Activated CD4-positive, alpha-beta T cell treated with anti-CD3 and anti-CD28 coated beads for 36 hours (primary cell): ENCODE measurements at regions of chr13 and their contacts with region 1.

Region 1: DNA sequence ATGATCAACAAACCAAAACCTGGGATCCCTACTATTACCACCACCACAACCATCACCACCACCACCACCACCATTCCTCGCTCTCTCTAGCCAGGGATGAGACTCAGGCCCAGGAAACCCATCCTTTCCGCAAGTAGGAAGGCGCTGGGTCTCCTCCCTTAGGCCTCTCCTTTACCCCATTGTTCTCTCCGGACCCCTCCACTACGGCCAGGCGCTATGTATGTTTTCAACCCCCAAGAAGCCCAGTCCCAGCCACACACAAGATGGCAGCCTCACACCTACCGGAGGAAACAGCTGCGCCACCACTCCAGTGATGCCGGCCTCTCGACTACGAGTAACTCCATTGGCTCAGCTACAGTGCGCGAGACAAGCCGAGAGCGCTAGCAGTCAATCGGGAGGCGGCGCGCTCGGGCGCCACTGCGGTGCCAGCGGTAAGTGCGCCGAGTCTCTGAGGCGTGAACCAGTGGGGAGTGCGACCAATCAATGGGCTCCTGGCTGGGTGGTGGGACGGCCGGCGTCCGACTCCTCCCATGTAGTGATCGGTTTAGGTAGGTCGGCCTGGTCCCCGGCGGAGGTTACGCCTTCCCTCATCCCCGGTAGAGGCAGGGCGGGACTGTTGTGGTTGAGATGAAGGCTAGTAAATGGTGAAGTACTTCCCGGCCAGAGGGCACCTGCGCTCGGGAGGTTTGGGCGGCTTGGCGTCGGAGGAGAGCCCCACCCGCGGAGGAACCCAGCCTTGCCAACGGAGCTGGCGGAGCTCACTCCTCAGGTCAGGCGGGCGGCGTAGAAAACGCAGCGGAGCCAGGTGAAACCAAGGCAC is at the starts of genes CAB39L and SETDB2:
- DNase-seq: peak; percentile 99
- ATAC-seq: peak; percentile 94
- H3K4me3 Mint-ChIP-seq: peak within 1 kb of the TSS; percentile 100
- H3K27ac Mint-ChIP-seq: peak within 1 kb of the TSS; percentile 100
- H3K4me1 Mint-ChIP-seq: peaks cover 57% of the 10 kb centered on the region
- H3K27me3 Mint-ChIP-seq: no peaks in the 10 kb centered on the region
- total RNA-seq, gene CAB39L: 4.8 to 5.7 TPM
- total RNA-seq, gene SETDB2: 14.2 to 15.1 TPM

Region 2: GRCh38 chr13:49110122-49110912 is 333.6 kb before region 1 on chr13:
- CTCF ChIA-PET with region 1: no interaction called
- POLR2A ChIA-PET with region 1: no interaction called
- intact Hi-C with region 1: loop called in 1 of 2 experiments (anchors 5 kb)
- DNase-seq: peak; percentile 87
- ATAC-seq: peak; percentile 79
- H3K4me3 Mint-ChIP-seq: peak overlapping the region; percentile 85
- H3K27ac Mint-ChIP-seq: peak overlapping the region; percentile 86
- H3K4me1 Mint-ChIP-seq: peaks cover 25% of the 10 kb centered on the region
- H3K27me3 Mint-ChIP-seq: no peaks in the 10 kb centered on the region

Region 3: GRCh38 chr13:49454388-49455006 is 10.6 kb after region 1 on chr13:
- CTCF ChIA-PET with region 1: interaction called, 7 read pairs
- POLR2A ChIA-PET with region 1: interaction called, 3 read pairs
- intact Hi-C with region 1: loop called in 1 of 2 experiments (anchors 1 kb)
- DNase-seq: no peak
- ATAC-seq: peak; percentile 87
- H3K4me3 Mint-ChIP-seq: peak overlapping the region; percentile 26
- H3K27ac Mint-ChIP-seq: peak overlapping the region; percentile 59
- H3K4me1 Mint-ChIP-seq: peaks cover 28% of the 10 kb centered on the region
- H3K27me3 Mint-ChIP-seq: no peaks in the 10 kb centered on the region

Region 4: DNA sequence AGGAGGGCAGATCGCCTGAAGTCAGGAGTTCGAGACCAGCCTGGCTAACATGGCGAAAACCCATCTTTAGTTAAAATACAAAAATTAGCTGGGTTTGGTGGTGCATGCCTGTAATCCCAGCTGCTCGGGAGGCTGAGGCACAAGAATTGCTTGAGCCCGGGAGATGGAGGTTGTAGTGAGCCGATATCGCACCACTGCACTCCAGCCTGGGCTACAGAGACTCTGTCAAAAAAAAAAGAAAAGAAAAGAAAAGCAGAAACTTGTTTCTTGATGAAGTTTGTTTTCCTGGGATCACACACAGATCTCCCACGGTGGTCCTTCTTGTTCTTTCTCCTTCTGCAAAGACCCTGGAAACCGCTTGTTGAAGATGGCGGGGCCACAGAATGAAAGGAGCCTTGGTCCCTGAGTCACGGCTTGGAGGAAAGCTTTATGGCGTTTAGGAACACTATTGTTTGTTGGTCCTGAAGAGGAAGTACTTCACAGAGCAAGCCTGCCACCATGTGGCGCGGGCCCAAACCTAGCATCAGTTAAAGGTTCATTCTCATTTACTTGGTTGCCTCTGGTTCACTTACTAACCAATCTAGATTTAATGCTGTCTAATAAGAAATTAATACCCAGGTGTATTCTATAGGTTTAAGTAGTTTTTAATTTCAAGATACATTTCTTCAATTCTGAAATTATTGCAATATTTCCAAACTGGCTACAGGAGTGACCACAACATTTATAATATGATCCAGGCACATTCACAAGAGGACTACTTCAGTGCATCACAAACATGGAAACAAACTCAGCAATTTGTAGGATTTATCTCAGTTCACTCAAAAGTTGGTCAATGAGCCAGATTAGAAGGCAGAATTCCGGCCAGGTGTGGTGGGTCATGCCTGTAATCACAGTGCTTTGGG is 163.1 kb after region 1 on chr13:
- CTCF ChIA-PET with region 1: interaction called, 5 read pairs
- POLR2A ChIA-PET with region 1: no interaction called
- intact Hi-C with region 1: loop called in 1 of 2 experiments (anchors 5 kb)
- DNase-seq: peak; percentile 90
- ATAC-seq: peak; percentile 98
- H3K4me3 Mint-ChIP-seq: peak overlapping the region; percentile 68
- H3K27ac Mint-ChIP-seq: peak overlapping the region; percentile 75
- H3K4me1 Mint-ChIP-seq: peaks cover 2% of the 10 kb centered on the region
- H3K27me3 Mint-ChIP-seq: no peaks in the 10 kb centered on the region

Region 5: DNA sequence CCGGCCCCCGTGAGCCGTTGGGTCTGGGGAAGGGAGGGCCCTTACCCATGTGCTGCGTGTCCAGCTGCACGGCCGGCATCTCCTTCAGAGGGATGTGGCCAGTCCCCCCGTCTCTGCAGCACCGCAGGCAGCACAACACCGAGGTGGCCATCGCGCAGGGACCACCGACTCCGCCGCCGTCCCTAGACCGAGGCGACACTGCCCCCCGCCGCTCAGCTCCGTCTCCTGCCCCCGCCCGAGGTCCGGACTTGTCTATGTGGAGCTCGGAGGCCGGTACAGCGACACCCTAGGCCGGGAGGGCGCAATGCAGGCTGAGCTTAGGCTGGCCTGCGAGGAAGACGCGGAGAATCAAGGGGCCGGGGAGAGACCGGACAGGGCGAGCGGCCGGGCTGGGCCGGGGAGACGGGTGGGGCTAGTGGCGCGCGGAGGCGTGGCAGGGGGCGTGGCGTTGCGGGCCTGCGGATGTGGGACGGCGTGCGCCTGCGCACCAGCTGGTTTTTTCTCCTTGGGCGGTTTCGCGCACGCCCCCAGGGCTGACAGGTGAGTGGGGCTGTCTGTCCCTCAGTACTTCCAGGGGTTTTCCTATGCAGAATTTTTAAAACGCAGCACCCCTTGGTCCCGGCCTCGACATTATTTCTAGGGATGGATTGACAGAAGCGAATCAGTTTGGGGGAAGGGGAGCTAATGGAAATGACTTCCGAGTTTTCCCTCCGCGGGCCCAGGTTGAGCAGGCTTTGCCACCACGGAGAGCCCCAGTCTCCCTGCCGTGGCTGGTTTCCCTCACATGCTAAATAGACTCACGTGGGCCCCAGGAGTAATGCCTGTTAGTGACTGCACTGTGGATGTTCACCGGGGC is 492.4 kb after region 1 on chr13 and contains the start of gene SPRYD7:
- CTCF ChIA-PET with region 1: no interaction called
- POLR2A ChIA-PET with region 1: no interaction called
- intact Hi-C with region 1: loop called in 1 of 2 experiments (anchors 1 kb)
- DNase-seq: peak; percentile 98
- ATAC-seq: peak; percentile 98
- H3K4me3 Mint-ChIP-seq: peak within 1 kb of the TSS; percentile 84
- H3K27ac Mint-ChIP-seq: peak within 1 kb of the TSS; percentile 73
- H3K4me1 Mint-ChIP-seq: peaks cover 11% of the 10 kb centered on the region
- H3K27me3 Mint-ChIP-seq: no peaks in the 10 kb centered on the region
- total RNA-seq, gene SPRYD7: 4.8 to 4.9 TPM